Naive thymus-derived CD4-positive, alpha-beta T cell (primary cell): ENCODE measurements at regions of chr12 and their contacts with region 1.

Region 1: GRCh38 chr12:57693659-57694458 is at the start of gene OS9:
- DNase-seq: peak; percentile 76 to 99 (median 98)
- ATAC-seq: peak; percentile 96
- H3K4me3 ChIP-seq: peak within 1 kb of the TSS; percentile 92
- H3K4me3 Mint-ChIP-seq: no peak within 1 kb of the TSS
- H3K27ac ChIP-seq: peak within 1 kb of the TSS; percentile 83
- H3K27ac Mint-ChIP-seq: no peak within 1 kb of the TSS
- H3K4me1 ChIP-seq: peaks cover 10 to 23% of the 10 kb centered on the region in 2 donors
- H3K4me1 Mint-ChIP-seq: peaks cover 2 to 14% (median 7%) of the 10 kb centered on the region in 7 donors
- H3K27me3 ChIP-seq: no peaks in the 10 kb centered on the region
- H3K27me3 Mint-ChIP-seq: peaks cover 0 to 18% (median 7%) of the 10 kb centered on the region in 5 donors
- total RNA-seq, gene OS9: 139 to 175 (median 171) TPM

Region 2: DNA sequence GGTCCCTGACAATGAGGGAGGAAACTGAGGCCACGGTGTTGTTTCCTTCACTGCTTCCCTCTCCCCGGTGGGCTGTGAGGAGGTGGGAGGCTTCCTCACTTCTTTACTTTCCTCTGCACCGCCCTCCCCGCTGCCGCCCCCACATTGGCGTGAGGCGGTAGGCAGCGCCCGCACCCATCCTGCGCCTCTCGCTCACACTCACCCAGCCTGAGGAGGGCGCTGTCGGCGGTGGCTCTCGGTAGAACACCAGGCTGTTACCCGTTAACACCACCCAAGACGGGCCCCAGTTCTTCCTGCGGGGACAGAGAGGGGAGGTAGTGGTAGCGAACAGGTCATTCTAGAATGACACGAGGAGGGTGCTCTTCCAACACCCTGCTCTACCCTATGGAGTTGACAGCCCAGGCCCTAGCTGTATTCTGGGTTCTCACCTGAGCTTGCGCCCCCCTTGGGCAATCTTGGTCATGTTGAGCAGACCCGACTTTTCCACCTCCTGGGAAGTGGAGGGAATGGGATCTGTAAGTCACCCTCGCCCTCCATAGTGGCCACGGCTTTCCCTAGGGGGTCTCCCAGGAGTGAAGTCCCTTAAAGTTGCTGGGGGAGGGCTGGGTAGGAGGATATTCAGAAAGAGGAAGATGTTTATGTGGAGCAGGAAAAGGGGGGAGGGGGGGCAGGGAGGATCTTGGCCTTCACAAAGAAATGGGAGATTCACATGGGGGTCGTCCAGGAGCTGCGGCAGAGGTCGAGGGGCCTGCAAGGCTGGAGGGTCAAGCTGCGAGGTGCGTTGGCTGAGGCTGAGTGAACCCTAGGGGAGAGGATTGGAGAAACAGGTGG is 217.5 kb before region 1 on chr12:
- CTCF ChIA-PET with region 1: interaction called, 3 read pairs
- POLR2A ChIA-PET with region 1: no interaction called
- intact Hi-C with region 1: loop called (anchors 5 kb)
- DNase-seq: peak; percentile 58 to 85 (median 70)
- ATAC-seq: peak; percentile 53
- H3K4me3 ChIP-seq: peak overlapping the region; percentile 95
- H3K4me3 Mint-ChIP-seq: peak overlapping the region; percentile 84 to 100 (median 98)
- H3K27ac ChIP-seq: peak overlapping the region; percentile 94
- H3K27ac Mint-ChIP-seq: peak overlapping the region; percentile 97 to 100 (median 100)
- H3K4me1 ChIP-seq: peaks cover 59 to 70% of the 10 kb centered on the region in 2 donors
- H3K4me1 Mint-ChIP-seq: peaks cover 66 to 85% (median 76%) of the 10 kb centered on the region in 7 donors
- H3K27me3 ChIP-seq: no peaks in the 10 kb centered on the region
- H3K27me3 Mint-ChIP-seq: no peaks in the 10 kb centered on the region

Region 3: GRCh38 chr12:57583008-57583831 is 110.6 kb before region 1 on chr12:
- CTCF ChIA-PET with region 1: interaction called, 4 read pairs
- POLR2A ChIA-PET with region 1: no interaction called
- intact Hi-C with region 1: loop called (anchors 1 kb)
- DNase-seq: peak; percentile 24 to 79 (median 71)
- ATAC-seq: peak; percentile 100
- H3K4me3 ChIP-seq: no peak overlapping the region
- H3K4me3 Mint-ChIP-seq: no peak overlapping the region
- H3K27ac ChIP-seq: no peak overlapping the region
- H3K27ac Mint-ChIP-seq: peak overlapping the region in 1 of 9 donors; percentile 78
- H3K4me1 ChIP-seq: no peaks in the 10 kb centered on the region
- H3K4me1 Mint-ChIP-seq: peaks cover 5 to 15% (median 6%) of the 10 kb centered on the region in 7 donors
- H3K27me3 ChIP-seq: no peaks in the 10 kb centered on the region
- H3K27me3 Mint-ChIP-seq: peaks cover 0 to 18% (median 14%) of the 10 kb centered on the region in 5 donors

Region 4: GRCh38 chr12:57632694-57633477 is 61.0 kb before region 1 on chr12 and contains the start of gene B4GALNT1:
- CTCF ChIA-PET with region 1: no interaction called
- POLR2A ChIA-PET with region 1: interaction called, 3 read pairs
- intact Hi-C with region 1: loop called (anchors 1 to 2 kb)
- DNase-seq: peak; percentile 33 to 74 (median 63)
- ATAC-seq: peak; percentile 96
- H3K4me3 ChIP-seq: peak within 1 kb of the TSS; percentile 57
- H3K4me3 Mint-ChIP-seq: peak within 1 kb of the TSS; percentile 51 to 83 (median 70)
- H3K27ac ChIP-seq: no peak within 1 kb of the TSS
- H3K27ac Mint-ChIP-seq: peak within 1 kb of the TSS in 3 of 9 donors; percentile 13 to 66 (median 46)
- H3K4me1 ChIP-seq: peaks cover 8% of the 10 kb centered on the region in 2 donors
- H3K4me1 Mint-ChIP-seq: peaks cover 0 to 14% (median 10%) of the 10 kb centered on the region in 7 donors
- H3K27me3 ChIP-seq: peaks cover 0 to 18% of the 10 kb centered on the region in 2 donors
- H3K27me3 Mint-ChIP-seq: peaks cover 34 to 69% (median 49%) of the 10 kb centered on the region in 5 donors
- total RNA-seq, gene B4GALNT1: 1.4 TPM in 1 of 5 experiments, not detected in the others

Region 5: GRCh38 chr12:57941165-57941894 is 247.5 kb after region 1 on chr12 and contains the start of gene ATP23:
- CTCF ChIA-PET with region 1: no interaction called
- POLR2A ChIA-PET with region 1: no interaction called
- intact Hi-C with region 1: loop called (anchors 5 kb)
- DNase-seq: peak; percentile 82 to 95 (median 90)
- ATAC-seq: peak; percentile 96
- H3K4me3 ChIP-seq: peak within 1 kb of the TSS; percentile 84
- H3K4me3 Mint-ChIP-seq: peak within 1 kb of the TSS; percentile 87 to 100 (median 98)
- H3K27ac ChIP-seq: peak within 1 kb of the TSS; percentile 90
- H3K27ac Mint-ChIP-seq: peak within 1 kb of the TSS; percentile 93 to 100 (median 99)
- H3K4me1 ChIP-seq: peaks cover 20 to 28% of the 10 kb centered on the region in 2 donors
- H3K4me1 Mint-ChIP-seq: peaks cover 24 to 54% (median 47%) of the 10 kb centered on the region in 7 donors
- H3K27me3 ChIP-seq: no peaks in the 10 kb centered on the region
- H3K27me3 Mint-ChIP-seq: no peaks in the 10 kb centered on the region
- total RNA-seq, gene ATP23: 7.2 to 12.3 (median 8.2) TPM